ENCODE measurements at regions of chr15 and their contacts with region 1.

Region 1: GRCh38 chr15:44584162-44584749 is 47.3 kb downstream of the EIF3J start:
- DNase-seq: peak; percentile 73
- ATAC-seq: peak; percentile 90
- H3K4me3 ChIP-seq: no peak overlapping the region
- H3K27ac ChIP-seq: no peak overlapping the region
- H3K4me1 ChIP-seq: peaks cover 18% of the 10 kb centered on the region
- H3K27me3 ChIP-seq: no peaks in the 10 kb centered on the region
- CTCF ChIP-seq: peak; percentile 90

Region 2: GRCh38 chr15:44598892-44599291 is 14.6 kb after region 1 on chr15:
- CTCF ChIA-PET with region 1: interaction called, 18 read pairs
- POLR2A ChIA-PET with region 1: no interaction called
- intact Hi-C with region 1: no loop called
- DNase-seq: no peak
- ATAC-seq: no peak
- H3K4me3 ChIP-seq: no peak overlapping the region
- H3K27ac ChIP-seq: no peak overlapping the region
- H3K4me1 ChIP-seq: no peaks in the 10 kb centered on the region
- H3K27me3 ChIP-seq: no peaks in the 10 kb centered on the region
- CTCF ChIP-seq: no peak

Region 3: DNA sequence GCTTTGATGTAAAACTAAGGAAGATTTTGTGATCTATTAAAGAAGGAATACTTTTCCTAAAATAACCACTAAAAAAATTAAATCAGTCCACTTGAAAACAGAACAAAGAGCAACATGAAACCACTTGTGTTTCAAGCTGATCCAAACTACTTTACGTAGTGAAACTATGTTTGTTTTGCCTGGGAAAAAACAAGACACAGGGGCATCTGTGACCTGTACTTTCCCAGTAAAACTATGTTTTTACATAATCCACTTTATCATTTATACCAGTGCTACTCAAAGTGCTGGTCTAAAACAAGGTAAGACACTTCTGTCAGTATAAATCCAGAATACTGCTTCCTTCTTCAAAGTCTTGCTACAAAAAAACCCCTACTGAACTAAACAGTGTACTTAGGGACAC is 22.5 kb after region 1 on chr15:
- CTCF ChIA-PET with region 1: interaction called, 18 read pairs
- POLR2A ChIA-PET with region 1: no interaction called
- intact Hi-C with region 1: no loop called
- DNase-seq: no peak
- ATAC-seq: no peak
- H3K4me3 ChIP-seq: no peak overlapping the region
- H3K27ac ChIP-seq: no peak overlapping the region
- H3K4me1 ChIP-seq: no peaks in the 10 kb centered on the region
- H3K27me3 ChIP-seq: no peaks in the 10 kb centered on the region
- CTCF ChIP-seq: no peak

Region 4: DNA sequence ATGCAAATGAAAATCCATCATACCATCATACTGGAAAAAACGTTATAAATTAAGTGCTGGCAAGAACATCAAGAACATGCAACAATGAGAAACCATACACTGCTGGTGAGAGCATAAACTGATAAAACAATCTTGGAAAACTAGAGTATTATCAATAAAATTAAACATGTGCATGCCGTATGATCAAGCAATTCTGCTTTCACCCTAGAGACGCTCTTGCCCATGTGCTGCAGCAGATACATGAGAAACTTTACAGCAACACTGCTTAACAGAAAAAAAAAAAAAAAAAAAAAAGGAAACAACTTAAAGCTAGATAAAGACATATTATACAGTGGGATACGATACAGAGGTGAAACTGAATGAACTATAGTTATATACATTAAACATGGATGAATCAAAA is 57.4 kb after region 1 on chr15:
- CTCF ChIA-PET with region 1: no interaction called
- POLR2A ChIA-PET with region 1: no interaction called
- intact Hi-C with region 1: loop called (anchors 5 kb)
- DNase-seq: no peak
- ATAC-seq: no peak
- H3K4me3 ChIP-seq: no peak overlapping the region
- H3K27ac ChIP-seq: no peak overlapping the region
- H3K4me1 ChIP-seq: no peaks in the 10 kb centered on the region
- H3K27me3 ChIP-seq: no peaks in the 10 kb centered on the region
- CTCF ChIP-seq: no peak

Region 5: DNA sequence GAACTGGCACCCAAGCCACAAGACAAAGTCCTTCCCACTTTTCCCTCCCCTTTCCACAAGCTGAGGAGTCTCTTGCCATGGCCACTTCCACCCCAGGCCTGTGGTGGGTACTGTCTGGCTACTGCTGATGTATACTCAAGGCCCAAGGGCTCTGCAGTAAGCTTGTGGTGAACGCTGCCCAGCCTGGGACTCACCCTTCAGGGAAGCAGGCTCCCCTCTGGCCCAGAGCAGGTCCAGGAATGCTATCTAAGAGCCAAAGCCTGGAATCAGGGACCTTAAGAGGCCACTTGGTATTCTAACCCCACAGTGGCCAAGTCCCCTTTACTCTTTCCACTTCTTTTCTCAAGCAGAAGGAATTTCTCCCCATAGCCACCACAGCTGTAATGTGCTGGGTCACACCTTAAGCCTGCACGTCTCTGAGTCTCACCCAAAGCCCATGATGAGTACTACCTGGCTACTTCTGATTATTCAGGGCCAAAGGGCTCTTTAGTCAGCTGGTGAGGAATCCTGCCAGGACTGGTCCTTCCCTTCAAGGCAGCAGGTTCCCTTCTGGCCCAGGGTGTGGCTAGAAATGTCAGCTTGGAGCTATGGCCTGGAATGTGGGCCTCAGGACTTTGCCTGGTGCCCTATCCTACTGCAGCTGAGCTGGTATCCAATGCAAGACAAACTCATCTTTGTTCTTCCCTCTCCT is 122.8 kb after region 1 on chr15:
- CTCF ChIA-PET with region 1: no interaction called
- POLR2A ChIA-PET with region 1: no interaction called
- intact Hi-C with region 1: no loop called
- DNase-seq: peak; percentile 85
- ATAC-seq: peak; percentile 14
- H3K4me3 ChIP-seq: no peak overlapping the region
- H3K27ac ChIP-seq: peak overlapping the region; percentile 46
- H3K4me1 ChIP-seq: peaks cover 17% of the 10 kb centered on the region
- H3K27me3 ChIP-seq: no peaks in the 10 kb centered on the region
- CTCF ChIP-seq: no peak

Region 6: DNA sequence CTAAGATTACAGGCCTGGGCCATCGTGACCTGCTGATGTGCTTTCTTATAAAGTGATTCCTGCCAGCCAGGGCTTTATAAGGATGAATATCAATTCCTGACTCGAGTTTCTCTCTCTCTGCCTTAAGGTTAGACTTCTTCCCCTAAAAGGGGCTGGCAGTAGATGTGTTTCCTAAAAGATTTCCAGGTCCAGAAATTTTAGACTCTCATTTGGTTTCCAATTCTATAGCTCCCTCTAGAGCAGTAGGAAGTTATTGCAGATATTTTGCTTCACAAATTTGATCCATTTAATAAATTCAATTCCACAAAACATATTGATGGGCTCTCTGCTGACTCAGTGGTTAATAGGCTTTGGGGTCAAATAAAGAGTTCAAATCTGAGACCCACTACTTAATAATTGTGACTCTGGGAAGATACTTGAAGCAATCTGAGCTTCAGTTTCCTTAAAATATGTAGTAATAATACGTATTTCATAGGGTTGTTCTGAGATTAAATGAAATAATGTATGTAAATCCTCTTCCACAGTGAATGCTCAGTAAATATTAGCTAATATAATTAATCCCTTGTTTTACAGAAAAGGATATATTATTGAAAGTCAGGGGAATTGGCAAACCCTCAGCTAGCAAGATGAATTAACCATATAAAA is 154.2 kb after region 1 on chr15:
- CTCF ChIA-PET with region 1: interaction called, 3 read pairs
- POLR2A ChIA-PET with region 1: interaction called, 29 read pairs
- intact Hi-C with region 1: loop called (anchors 5 kb)
- DNase-seq: peak; percentile 87
- ATAC-seq: no peak
- H3K4me3 ChIP-seq: no peak overlapping the region
- H3K27ac ChIP-seq: no peak overlapping the region
- H3K4me1 ChIP-seq: no peaks in the 10 kb centered on the region
- H3K27me3 ChIP-seq: no peaks in the 10 kb centered on the region
- CTCF ChIP-seq: peak; percentile 94